Right ventricle myocardium inferior (tissue), 1 donor: ENCODE measurements at regions of chr15 and their contacts with region 1.

Region 1: GRCh38 chr15:25850154-25851111 is 12.7 kb downstream of the ATP10A start:
- DNase-seq: peak; percentile 91
- ATAC-seq: peak; percentile 91

Region 2: GRCh38 chr15:25790000-25790660 is 60.3 kb before region 1 on chr15:
- intact Hi-C with region 1: loop called (anchors 5 kb)
- DNase-seq: no peak
- ATAC-seq: peak; percentile 73

Region 3: GRCh38 chr15:25930931-25931330 is 80.5 kb after region 1 on chr15:
- intact Hi-C with region 1: no loop called
- DNase-seq: no peak
- ATAC-seq: no peak